CD8-positive, alpha-beta T cell (primary cell): ENCODE measurements at regions of chr5 and their contacts with region 1.

Region 1: DNA sequence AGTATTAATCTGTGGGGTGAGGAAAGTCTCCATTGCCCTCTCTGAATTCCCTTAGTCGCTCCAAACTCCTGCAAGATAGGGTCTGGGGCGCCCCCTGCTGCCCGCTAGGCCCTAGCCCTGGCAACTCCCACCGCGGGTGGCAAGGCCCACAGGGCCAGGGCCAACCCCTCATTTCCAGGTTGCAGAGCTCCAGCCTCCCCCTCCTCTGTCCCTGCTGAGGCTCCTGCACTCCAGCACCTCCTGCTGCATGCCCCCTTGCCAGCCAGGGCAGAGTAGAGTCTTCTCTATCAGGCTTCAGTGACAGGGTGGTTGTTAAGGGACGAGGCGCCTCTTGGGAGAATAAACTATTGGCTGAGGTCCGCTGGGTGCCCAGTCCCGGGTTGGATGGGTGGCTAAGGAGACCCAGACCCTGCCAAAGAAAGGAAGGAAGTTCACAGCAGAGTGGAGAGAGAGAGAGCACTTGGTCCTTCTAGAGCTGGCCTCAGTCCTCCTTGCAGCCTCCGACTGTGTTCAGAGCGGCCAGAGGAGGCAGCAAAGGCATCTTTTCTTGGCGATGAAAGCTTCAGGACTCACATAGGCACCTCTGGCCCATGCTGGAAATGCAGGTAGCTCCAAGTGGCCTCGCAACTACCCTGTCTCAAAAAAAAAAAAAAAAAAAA is 45.6 kb downstream of the SAR1B start:
- DNase-seq: peak; percentile 62 to 89 (median 80)
- ATAC-seq: peak; percentile 95
- H3K4me3 ChIP-seq: no peak overlapping the region
- H3K4me3 Mint-ChIP-seq: no peak overlapping the region
- H3K27ac ChIP-seq: no peak overlapping the region
- H3K27ac Mint-ChIP-seq: peak overlapping the region; percentile 13
- H3K4me1 ChIP-seq: peaks cover 4% of the 10 kb centered on the region
- H3K4me1 Mint-ChIP-seq: peaks cover 9% of the 10 kb centered on the region
- H3K27me3 ChIP-seq: no peaks in the 10 kb centered on the region
- H3K27me3 Mint-ChIP-seq: no peaks in the 10 kb centered on the region
- CTCF ChIP-seq: peak; percentile 87

Region 2: DNA sequence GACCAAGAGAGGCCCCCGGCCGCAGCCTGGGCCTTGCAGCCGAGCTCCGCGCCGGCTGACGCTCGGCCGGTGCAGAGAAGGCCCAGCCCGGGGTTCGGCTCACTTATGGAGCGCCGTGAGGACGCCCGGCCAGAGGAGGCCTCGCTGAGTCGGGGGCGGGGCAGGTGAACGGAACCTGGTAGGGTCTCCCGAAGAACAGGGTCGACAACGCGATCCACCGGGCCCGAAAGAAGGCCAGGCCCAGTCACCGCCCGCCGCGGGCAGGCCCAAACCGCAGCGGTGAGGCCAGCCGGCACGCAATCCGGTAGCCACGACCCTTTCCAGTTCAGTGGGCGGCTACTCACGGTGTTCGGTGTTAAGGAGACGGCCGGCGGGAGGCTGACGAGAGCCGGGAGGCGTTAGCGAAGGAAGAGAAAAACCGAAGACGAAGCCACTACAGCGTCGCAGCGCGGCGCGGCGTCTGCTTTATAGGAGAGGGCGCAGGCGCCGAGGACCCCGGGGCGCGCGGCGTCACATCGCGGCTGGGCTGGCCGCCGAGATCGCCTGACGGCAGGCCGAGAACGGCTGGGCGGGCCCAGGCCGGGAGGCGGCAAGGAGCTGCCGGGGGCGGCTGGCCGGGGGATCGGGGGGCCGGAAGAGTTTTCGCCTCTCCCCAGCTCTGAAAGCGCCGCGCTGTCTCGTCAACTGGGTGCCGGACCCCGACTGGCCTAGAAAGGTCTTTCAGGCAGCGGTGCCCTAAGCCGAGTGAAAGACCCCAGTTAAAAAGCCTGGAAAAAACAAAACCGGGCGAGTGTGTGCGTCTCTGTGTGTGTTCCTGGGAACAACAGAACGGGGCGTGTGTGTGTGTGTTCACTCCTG is 410.3 kb before region 1 on chr5 and contains the start of gene SKP1:
- CTCF ChIA-PET with region 1: interaction called, 3 read pairs
- POLR2A ChIA-PET with region 1: no interaction called
- intact Hi-C with region 1: loop called in 1 of 2 experiments (anchors 2 kb)
- DNase-seq: peak; percentile 79 to 93 (median 85)
- ATAC-seq: peak; percentile 88
- H3K4me3 ChIP-seq: peak within 1 kb of the TSS; percentile 98 to 99
- H3K4me3 Mint-ChIP-seq: peak within 1 kb of the TSS; percentile 98
- H3K27ac ChIP-seq: peak within 1 kb of the TSS; percentile 98
- H3K27ac Mint-ChIP-seq: peak within 1 kb of the TSS; percentile 99
- H3K4me1 ChIP-seq: peaks cover 31% of the 10 kb centered on the region
- H3K4me1 Mint-ChIP-seq: peaks cover 34% of the 10 kb centered on the region
- H3K27me3 ChIP-seq: no peaks in the 10 kb centered on the region
- H3K27me3 Mint-ChIP-seq: no peaks in the 10 kb centered on the region
- CTCF ChIP-seq: no peak
- total RNA-seq, gene SKP1: 290 to 301 TPM

Region 3: GRCh38 chr5:134184155-134185135 is 402.6 kb before region 1 on chr5:
- CTCF ChIA-PET with region 1: interaction called, 8 read pairs
- POLR2A ChIA-PET with region 1: no interaction called
- intact Hi-C with region 1: loop called (anchors 1 to 2 kb)
- DNase-seq: peak; percentile 62 to 84 (median 77)
- ATAC-seq: peak; percentile 98
- H3K4me3 ChIP-seq: no peak overlapping the region
- H3K4me3 Mint-ChIP-seq: no peak overlapping the region
- H3K27ac ChIP-seq: no peak overlapping the region
- H3K27ac Mint-ChIP-seq: no peak overlapping the region
- H3K4me1 ChIP-seq: peaks cover 4% of the 10 kb centered on the region
- H3K4me1 Mint-ChIP-seq: no peaks in the 10 kb centered on the region
- H3K27me3 ChIP-seq: no peaks in the 10 kb centered on the region
- H3K27me3 Mint-ChIP-seq: no peaks in the 10 kb centered on the region
- CTCF ChIP-seq: peak; percentile 84

Region 4: DNA sequence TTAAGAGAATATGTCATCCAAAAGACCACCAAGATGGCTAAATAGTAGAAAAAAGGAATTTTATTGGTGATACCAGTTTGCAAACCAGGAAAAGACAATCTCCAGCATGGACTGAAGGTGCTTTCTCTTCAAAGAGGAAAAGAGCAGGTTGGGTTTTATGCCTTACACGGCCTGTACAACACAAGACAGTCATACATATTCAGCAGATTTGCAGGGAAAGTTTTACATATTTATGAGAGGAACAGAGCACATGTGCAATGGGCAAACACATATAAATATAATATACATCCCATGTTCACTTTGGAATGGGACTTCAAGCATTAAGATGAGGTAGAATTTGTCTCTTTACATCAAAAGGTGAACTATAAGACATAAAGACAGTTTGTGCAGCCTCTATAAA is 290.8 kb before region 1 on chr5:
- CTCF ChIA-PET with region 1: interaction called, 15 read pairs
- POLR2A ChIA-PET with region 1: no interaction called
- intact Hi-C with region 1: no loop called
- DNase-seq: no peak
- ATAC-seq: no peak
- H3K4me3 ChIP-seq: no peak overlapping the region
- H3K4me3 Mint-ChIP-seq: no peak overlapping the region
- H3K27ac ChIP-seq: no peak overlapping the region
- H3K27ac Mint-ChIP-seq: no peak overlapping the region
- H3K4me1 ChIP-seq: no peaks in the 10 kb centered on the region
- H3K4me1 Mint-ChIP-seq: no peaks in the 10 kb centered on the region
- H3K27me3 ChIP-seq: no peaks in the 10 kb centered on the region
- H3K27me3 Mint-ChIP-seq: no peaks in the 10 kb centered on the region
- CTCF ChIP-seq: no peak

Region 5: GRCh38 chr5:134304311-134304710 is 282.7 kb before region 1 on chr5:
- CTCF ChIA-PET with region 1: interaction called, 36 read pairs
- POLR2A ChIA-PET with region 1: no interaction called
- intact Hi-C with region 1: loop called (anchors 1 kb)
- DNase-seq: no peak
- ATAC-seq: no peak
- H3K4me3 ChIP-seq: no peak overlapping the region
- H3K4me3 Mint-ChIP-seq: no peak overlapping the region
- H3K27ac ChIP-seq: no peak overlapping the region
- H3K27ac Mint-ChIP-seq: no peak overlapping the region
- H3K4me1 ChIP-seq: no peaks in the 10 kb centered on the region
- H3K4me1 Mint-ChIP-seq: no peaks in the 10 kb centered on the region
- H3K27me3 ChIP-seq: no peaks in the 10 kb centered on the region
- H3K27me3 Mint-ChIP-seq: no peaks in the 10 kb centered on the region
- CTCF ChIP-seq: no peak

Region 6: DNA sequence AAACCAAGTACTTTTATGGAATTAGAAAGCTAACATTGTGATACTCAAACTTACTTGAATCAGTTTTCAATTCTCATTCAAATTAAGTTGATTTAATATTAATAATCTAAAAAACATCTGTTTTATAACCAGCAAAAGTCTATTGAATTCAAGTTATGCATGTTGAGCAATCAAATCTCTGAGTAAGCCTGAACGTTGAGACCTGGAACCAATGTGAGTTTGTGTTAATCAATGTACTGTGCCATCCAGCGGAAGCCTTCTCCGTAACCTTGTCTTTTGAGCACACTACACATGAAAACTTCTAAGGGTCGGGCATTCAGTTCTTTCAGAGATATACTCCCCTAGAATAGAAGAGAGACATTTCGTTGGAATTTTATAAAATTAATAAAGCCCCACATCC is 19.7 kb after region 1 on chr5:
- CTCF ChIA-PET with region 1: interaction called, 10 read pairs
- POLR2A ChIA-PET with region 1: no interaction called
- intact Hi-C with region 1: no loop called
- DNase-seq: no peak
- ATAC-seq: no peak
- H3K4me3 ChIP-seq: no peak overlapping the region
- H3K4me3 Mint-ChIP-seq: no peak overlapping the region
- H3K27ac ChIP-seq: no peak overlapping the region
- H3K27ac Mint-ChIP-seq: no peak overlapping the region
- H3K4me1 ChIP-seq: no peaks in the 10 kb centered on the region
- H3K4me1 Mint-ChIP-seq: no peaks in the 10 kb centered on the region
- H3K27me3 ChIP-seq: no peaks in the 10 kb centered on the region
- H3K27me3 Mint-ChIP-seq: no peaks in the 10 kb centered on the region
- CTCF ChIP-seq: no peak